Left cardiac atrium (tissue), 4 donors: ENCODE measurements at regions of chr6 and their contacts with region 1.

Region 1: GRCh38 chr6:41787219-41787917 is at the start of gene TOMM6:
- DNase-seq: peak; percentile 97
- ATAC-seq: peak; percentile 89
- total RNA-seq, gene TOMM6: 131 to 138 TPM

Region 2: DNA sequence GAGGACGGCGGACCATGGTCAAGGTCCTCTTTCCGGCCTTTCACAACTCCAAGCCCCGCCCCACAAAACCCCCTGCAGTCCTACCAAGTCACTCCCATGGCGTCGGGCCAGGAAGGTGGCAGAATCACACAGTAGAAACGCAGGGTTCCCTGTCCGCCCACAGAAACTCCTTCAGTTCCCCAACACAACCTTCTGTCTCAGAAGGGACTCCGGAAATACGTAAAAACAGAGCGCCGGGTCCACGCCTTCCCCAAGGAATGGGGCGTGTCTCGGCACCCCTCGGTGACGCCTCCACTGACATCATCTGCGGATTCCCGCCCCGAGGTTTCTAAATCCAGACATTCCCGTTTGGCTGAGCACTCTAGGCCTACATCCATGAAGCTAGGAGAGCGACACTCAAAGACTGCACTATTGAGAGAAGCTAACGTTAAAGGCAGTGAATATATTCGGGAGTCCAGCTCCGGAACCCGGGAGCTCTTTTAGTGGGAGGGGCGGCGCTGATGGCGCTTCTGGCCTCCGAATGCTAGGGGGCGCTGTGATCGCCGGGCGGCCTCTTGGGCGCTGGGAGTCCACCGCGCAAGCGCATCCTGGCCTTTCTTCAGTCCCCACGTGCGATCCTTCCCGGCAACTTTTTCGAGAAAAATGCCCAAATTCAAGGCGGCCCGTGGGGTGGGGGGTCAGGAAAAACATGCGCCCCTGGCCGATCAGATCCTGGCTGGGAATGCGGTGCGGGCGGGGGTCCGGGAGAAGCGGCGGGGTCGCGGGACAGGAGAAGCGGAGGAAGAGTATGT is 133.7 kb after region 1 on chr6 and contains the starts of genes BYSL and MED20:
- intact Hi-C with region 1: loop called (anchors 5 to 10 kb)
- DNase-seq: peak; percentile 93
- ATAC-seq: peak; percentile 98
- total RNA-seq, gene BYSL: 8.7 to 16.5 TPM
- total RNA-seq, gene MED20: 14.8 to 15.7 TPM

Region 3: DNA sequence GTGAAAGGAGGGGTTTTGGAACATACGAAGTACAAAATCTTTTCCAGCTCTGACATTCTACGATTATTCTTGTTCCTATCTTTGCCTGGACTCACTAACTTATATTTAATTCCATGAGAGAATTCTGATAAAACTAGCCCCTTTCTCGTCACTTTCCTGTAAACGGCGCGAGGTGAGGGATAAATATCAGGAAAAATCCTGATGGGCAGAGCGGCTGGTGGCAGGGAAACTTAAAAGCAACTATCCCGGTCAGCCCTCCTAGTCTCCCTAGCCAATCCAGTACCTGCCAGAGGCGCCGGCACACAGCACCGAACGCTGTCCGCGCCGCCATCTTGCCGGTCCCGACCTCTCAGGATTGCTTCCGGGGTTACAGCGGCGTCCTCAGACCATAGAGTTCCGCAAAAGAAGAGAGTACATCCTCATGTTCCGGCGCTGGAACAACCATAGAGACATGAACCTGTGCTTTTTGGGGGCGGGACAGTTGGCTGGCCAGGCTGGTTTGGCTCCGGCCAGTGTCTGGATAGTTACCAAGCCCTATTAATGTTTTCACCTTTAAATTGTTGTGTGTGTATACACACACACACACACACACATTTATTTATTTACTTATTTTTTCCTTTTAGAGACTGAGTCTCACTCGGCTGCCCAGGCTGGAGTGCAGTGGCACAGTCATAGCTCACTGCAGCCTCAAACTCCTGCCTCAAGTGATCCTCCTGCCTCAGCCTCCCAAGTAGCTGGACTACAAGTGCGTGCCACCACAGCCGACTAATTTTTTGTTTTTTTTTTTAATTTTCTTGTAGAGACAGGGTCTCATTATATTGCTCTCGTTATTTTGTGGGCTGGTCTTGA is 430.4 kb after region 1 on chr6 and contains the start of gene MRPS10:
- intact Hi-C with region 1: loop called in 1 of 2 experiments (anchors 10 kb)
- DNase-seq: peak; percentile 93
- ATAC-seq: peak; percentile 100
- total RNA-seq, gene MRPS10: 39.2 to 44.2 TPM